A549 (cell line): ENCODE measurements at regions of chr7 and their contacts with region 1.

Region 1: DNA sequence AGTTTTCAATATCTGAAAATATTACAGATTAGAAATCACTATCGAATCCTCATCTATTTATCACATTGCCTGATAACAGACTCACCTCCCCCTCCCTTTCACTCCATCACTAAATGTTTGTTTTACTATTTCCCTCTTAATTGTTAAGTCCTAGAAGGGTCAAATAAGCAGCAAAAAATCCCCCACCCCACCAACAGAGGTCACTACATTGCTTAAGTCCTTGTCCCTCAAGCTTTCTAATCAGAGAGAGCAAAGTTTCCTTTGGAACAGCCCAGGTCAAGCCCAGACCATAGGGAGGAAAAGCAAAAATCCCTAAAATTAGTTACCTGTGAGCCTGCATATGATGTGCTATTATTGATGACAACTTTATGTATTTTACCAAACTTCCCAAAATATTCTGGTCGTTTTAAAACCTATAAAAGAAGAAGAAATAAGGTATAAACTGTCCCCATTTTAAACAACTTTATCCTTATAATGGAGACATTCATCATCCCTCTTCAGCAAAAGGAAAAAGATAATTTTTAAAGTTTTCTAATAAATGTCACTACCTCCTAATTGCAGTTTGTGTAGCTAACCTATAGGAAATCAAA is 95.0 kb downstream of the CNOT4 start:
- DNase-seq: peak; percentile 16 to 83
- ATAC-seq: peak; percentile 80 to 90
- H3K4me3 ChIP-seq: no peak overlapping the region
- H3K27ac ChIP-seq: no peak overlapping the region
- H3K4me1 ChIP-seq: no peaks in the 10 kb centered on the region
- CTCF ChIP-seq: peak; percentile 68
- EP300 ChIP-seq: no peak
- POLR2A ChIP-seq: no peak
- RAD21 ChIP-seq: peak; percentile 59 to 60

Region 2: GRCh38 chr7:135425036-135425435 is 10.1 kb after region 1 on chr7:
- CTCF ChIA-PET with region 1: interaction called, 12 read pairs
- POLR2A ChIA-PET with region 1: no interaction called
- DNase-seq: no peak
- ATAC-seq: no peak
- H3K4me3 ChIP-seq: no peak overlapping the region
- H3K27ac ChIP-seq: no peak overlapping the region
- H3K4me1 ChIP-seq: peaks cover 8% of the 10 kb centered on the region; the same call in 1 of the 3 replicates
- CTCF ChIP-seq: no peak
- EP300 ChIP-seq: no peak
- POLR2A ChIP-seq: no peak
- RAD21 ChIP-seq: no peak

Region 3: DNA sequence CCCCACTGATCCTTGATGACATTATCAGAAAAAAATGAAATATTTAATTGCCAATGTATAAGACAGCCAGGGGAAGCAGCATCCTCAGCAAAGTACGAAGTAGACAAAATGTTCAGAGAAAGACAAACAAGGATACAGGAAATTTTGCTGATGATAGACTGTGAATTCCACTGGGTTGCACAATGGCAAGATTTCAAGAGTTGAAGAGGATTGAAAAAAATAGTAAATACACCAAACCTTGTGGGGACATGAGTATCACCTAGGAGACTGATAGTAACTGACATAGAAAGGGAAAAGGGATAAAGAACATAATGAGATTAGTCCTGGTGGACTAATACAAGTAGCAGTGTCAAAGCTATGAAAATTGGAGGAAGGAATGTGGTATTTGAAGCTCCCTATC is 78.4 kb after region 1 on chr7:
- CTCF ChIA-PET with region 1: no interaction called
- POLR2A ChIA-PET with region 1: no interaction called
- DNase-seq: no peak
- ATAC-seq: no peak
- H3K4me3 ChIP-seq: no peak overlapping the region
- H3K27ac ChIP-seq: no peak overlapping the region
- H3K4me1 ChIP-seq: peaks cover 16% of the 10 kb centered on the region
- CTCF ChIP-seq: no peak
- EP300 ChIP-seq: no peak
- POLR2A ChIP-seq: no peak
- RAD21 ChIP-seq: no peak